ENCODE measurements at regions of chr22 and their contacts with region 1.

Region 1: DNA sequence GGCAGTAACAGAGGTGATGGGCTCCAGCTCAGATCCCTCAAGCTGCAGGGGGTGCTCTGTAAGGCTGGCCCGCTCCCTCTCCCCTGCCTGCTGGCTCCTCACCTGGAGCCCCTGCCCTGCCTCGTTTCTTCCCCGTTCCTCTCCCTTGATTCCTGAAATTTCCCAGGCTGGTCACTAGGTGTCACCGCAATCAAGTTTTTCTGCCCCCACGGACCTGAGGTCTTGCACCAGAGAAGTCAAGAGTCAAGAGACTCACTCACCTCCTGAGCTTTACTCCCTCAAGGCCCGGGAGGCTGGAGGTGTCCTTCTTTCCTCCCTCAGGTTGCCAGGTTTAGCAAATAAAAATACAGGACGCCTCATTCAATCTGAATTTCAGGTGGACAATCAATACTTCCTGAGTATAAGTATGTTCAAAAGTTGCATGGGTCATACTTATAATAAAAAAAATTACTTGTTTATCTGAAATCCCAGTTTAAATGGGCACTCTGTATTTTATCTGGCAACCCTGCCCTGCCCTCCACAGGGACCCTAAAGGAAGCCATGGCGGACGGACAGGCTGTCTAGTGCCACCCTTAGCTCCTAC is 69.2 kb downstream of the SCUBE1 start:
- DNase-seq: no peak
- H3K4me3 ChIP-seq: no peak overlapping the region
- H3K27ac ChIP-seq: no peak overlapping the region
- H3K27me3 ChIP-seq: peaks cover 20% of the 10 kb centered on the region
- CTCF ChIP-seq: peak; percentile 68

Region 2: DNA sequence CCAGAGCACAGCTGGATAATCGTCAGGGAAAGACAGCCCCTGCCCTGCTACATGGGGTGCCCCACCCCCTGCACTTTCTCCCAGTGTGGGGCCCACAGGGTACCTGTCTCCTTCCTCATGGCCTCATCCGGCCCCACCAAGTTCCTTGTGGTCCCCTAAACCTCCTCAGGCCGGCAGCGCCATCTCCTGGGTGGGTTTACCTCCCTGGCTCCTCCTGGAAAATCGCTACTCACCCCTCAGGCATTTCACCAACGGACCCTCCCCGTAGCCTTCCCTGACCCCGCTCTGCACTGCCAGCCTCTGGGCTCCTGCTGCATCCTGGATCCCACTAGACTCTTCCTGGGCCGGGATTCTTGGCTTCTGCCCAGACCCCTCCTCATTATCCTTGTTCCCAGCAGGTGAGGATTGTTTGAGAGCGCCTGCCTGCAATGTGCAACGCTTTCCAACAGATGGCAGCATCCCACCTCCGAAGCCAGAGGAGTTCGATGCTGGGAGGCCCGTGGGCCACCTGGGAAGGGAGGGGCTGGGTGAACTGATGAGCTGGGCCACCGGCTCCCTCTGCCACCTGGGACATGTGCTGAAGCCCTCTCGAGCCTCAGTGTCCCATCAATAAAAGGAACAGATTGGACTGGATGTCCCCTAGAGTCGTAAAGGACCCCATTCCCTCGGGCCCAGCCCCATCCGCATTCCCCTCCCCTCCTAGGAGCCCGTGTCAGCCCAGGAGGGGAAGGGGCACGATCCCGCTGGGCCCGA is 42.8 kb before region 1 on chr22:
- CTCF ChIA-PET with region 1: interaction called, 14 read pairs
- POLR2A ChIA-PET with region 1: no interaction called
- DNase-seq: no peak
- H3K4me3 ChIP-seq: no peak overlapping the region
- H3K27ac ChIP-seq: no peak overlapping the region
- H3K27me3 ChIP-seq: peaks cover 36% of the 10 kb centered on the region
- CTCF ChIP-seq: peak; percentile 88

Region 3: GRCh38 chr22:43260331-43261231 is 13.4 kb before region 1 on chr22:
- CTCF ChIA-PET with region 1: interaction called, 16 read pairs
- POLR2A ChIA-PET with region 1: interaction called, 3 read pairs
- DNase-seq: no peak
- H3K4me3 ChIP-seq: no peak overlapping the region
- H3K27ac ChIP-seq: no peak overlapping the region
- H3K27me3 ChIP-seq: peaks cover 27% of the 10 kb centered on the region
- CTCF ChIP-seq: no peak

Region 4: DNA sequence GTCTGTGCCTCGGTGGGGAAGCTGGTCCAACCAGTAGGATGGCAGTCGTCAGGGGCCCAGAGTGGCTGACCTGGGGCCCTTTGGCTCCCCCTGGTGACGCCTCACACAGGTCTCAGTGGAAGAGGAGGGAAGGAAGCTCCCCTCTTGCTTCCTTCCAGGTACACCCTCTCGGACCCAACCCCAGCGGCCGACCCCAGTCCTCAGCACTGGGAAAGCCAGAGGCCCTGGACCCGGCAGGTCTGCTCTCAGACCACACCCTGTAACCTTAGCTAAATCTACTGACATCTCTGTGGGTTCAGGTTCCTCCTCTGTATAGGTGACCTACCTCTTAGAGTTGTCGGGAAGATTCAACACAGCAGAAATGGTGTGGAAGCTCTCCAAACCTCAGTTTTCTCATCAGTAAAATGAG is 72.5 kb after region 1 on chr22:
- CTCF ChIA-PET with region 1: interaction called, 145 read pairs
- POLR2A ChIA-PET with region 1: no interaction called
- DNase-seq: no peak
- H3K4me3 ChIP-seq: no peak overlapping the region
- H3K27ac ChIP-seq: no peak overlapping the region
- H3K27me3 ChIP-seq: peaks cover 30% of the 10 kb centered on the region
- CTCF ChIP-seq: peak; percentile 67

Region 5: DNA sequence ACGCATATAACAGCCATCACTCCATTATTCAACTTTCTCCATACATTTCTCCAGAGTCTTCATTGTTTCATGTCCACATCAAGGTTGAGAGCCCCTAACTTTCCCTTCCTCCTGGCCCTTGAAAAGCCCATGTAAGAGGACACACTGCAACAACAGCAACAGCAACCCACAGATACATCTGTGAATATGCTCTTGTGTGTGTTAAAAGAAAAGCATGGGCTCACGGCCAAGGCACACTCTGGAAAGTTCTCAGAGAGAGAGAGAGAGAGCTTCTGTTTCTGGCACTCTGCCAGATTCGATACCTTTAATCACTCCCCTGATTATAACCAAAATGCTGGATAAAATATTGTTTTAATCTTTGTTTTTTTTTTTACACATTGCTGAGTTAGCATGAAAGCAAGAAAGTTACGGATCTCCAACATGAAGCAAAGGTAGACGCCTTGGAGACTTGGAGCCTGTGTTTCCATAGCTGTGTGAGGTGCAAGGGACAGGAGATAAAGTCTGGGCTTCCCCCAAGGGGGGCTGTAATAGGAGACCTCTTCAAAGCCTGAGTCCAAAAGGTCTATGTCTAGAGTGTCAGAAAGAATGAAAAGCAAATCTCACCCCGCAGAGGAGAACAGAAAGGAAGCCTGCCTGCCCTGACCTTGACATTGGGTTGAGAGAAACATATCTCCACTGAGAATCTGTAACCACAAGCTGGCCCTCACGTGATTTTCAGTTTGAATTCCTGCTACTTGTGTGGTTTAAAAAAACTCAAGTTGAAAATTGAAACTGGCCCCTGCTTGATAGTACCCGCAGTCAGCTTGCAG is 104.1 kb after region 1 on chr22:
- CTCF ChIA-PET with region 1: interaction called, 43 read pairs
- POLR2A ChIA-PET with region 1: no interaction called
- DNase-seq: no peak
- H3K4me3 ChIP-seq: no peak overlapping the region
- H3K27ac ChIP-seq: no peak overlapping the region
- H3K27me3 ChIP-seq: peaks cover 13% of the 10 kb centered on the region
- CTCF ChIP-seq: no peak

Region 6: GRCh38 chr22:43385770-43386641 is 112.0 kb after region 1 on chr22:
- CTCF ChIA-PET with region 1: interaction called, 43 read pairs
- POLR2A ChIA-PET with region 1: no interaction called
- DNase-seq: peak; percentile 36
- H3K4me3 ChIP-seq: no peak overlapping the region
- H3K27ac ChIP-seq: no peak overlapping the region
- H3K27me3 ChIP-seq: peaks cover 4% of the 10 kb centered on the region
- CTCF ChIP-seq: peak; percentile 95

Measured in AG04450 (cell line).